Tibial artery (tissue), 4 donors: ENCODE measurements at regions of chr10 and their contacts with region 1.

Region 1: DNA sequence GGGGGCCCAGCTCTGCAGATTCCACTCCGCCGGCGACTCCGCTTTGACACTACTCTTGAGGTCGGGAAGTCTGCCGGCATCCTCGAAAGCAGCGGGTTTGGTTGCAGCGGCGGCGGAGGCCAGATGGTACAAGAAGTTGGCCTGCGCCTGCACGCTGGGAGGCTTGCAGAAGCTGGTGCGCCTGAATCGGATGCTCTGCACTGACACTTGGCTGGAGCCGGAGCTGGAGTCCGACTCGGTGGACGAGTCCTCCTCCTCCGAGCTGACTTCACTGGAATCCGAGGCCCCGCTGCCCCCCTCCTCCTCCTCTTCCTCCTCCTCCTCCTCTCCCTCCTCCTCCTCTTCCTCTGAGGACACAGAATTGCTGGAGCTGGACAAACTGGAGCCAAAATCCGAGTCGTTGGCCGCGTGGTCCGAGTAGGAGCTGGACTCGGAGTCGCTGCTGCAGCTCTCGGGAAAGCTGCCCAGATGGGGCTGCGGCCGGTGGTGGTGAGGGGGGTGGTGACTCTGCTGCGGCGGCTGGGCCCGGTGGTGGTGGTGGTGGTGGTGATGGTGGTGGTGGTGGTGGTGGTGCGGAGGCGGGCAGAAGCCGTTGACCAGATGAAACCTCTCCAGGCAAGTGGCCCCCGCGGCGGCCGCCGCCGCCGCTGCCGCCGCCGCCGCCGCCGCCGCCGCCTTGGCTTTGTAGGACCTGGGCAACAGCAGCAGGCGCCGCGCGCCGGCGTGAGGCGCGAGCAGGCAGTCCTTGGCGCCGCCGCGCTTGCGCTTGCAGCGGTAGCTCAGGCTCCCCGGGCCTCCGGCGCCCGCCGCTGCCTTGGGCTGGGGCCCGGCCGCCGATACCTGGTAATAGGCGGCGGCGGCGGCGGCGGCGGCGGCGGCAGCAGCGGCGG is 9.0 kb downstream of the SKIDA1 start:
- DNase-seq: peak; percentile 51 to 75
- H3K4me3 ChIP-seq: peak overlapping the region; percentile 52 to 65
- H3K27ac ChIP-seq: peak overlapping the region in 1 of 2 donors; percentile 18
- H3K4me1 ChIP-seq: peaks cover 0 to 26% (median 15%) of the 10 kb centered on the region in 4 donors
- H3K27me3 ChIP-seq: peaks cover 0 to 80% of the 10 kb centered on the region in 2 donors
- CTCF ChIP-seq: no peak

Region 2: GRCh38 chr10:21675157-21675796 is 158.8 kb after region 1 on chr10:
- intact Hi-C with region 1: no loop called
- DNase-seq: no peak
- H3K4me3 ChIP-seq: no peak overlapping the region
- H3K27ac ChIP-seq: no peak overlapping the region
- H3K4me1 ChIP-seq: peaks cover 0 to 10% (median 3%) of the 10 kb centered on the region in 4 donors
- H3K27me3 ChIP-seq: no peaks in the 10 kb centered on the region
- CTCF ChIP-seq: peak; percentile 40 to 52

Region 3: DNA sequence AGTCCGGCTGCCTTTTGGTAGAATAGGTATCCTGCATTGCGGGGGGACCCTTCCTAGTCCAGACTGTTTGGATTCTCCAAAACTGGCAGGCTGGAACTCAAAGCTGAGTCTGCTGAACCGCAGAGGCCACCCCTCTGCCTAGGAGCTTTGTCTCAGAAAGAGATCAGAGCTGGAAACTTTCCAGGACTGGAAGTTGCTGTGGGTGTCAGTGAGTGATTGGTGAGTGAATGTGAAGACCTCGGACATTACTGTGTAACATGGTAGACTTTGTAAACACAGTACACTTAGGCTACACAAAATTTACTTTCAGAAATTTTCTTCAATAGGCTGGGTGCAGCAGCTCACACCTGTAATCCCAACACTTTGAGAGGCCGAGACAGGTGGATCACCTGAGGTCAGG is 383.2 kb after region 1 on chr10:
- intact Hi-C with region 1: no loop called
- DNase-seq: no peak
- H3K4me3 ChIP-seq: no peak overlapping the region
- H3K27ac ChIP-seq: no peak overlapping the region
- H3K4me1 ChIP-seq: no peaks in the 10 kb centered on the region
- H3K27me3 ChIP-seq: no peaks in the 10 kb centered on the region
- CTCF ChIP-seq: no peak

Region 4: DNA sequence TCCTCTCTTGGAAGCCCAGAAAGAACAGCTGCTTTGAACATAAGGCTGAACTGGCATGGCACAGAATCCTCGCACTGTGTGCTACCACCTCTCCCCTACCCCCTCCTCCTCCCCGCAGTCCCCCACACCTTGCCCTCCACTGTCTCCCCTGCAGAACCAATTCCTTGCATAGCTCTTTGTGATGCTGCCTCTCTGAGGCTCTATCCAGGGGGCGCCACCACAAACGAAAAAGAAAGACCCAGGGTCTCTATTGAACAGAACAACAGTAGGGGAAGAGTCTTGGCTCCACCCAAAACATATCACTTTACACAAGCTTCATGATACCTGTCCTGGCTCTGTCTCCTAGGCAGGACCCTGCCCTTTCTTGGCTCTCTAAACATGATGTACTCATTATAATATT is 727.5 kb after region 1 on chr10:
- intact Hi-C with region 1: loop called (anchors 10 kb)
- DNase-seq: no peak
- H3K4me3 ChIP-seq: no peak overlapping the region
- H3K27ac ChIP-seq: no peak overlapping the region
- H3K4me1 ChIP-seq: peaks cover 0 to 12% (median 2%) of the 10 kb centered on the region in 4 donors
- H3K27me3 ChIP-seq: peaks cover 0 to 22% of the 10 kb centered on the region in 2 donors
- CTCF ChIP-seq: no peak